Activated CD4-positive, alpha-beta memory T cell treated with anti-CD3 and anti-CD28 coated beads, Interleukin-2, amount 10 ng/mL, durations not matched to agents 7 days and 5 days (primary cell): ENCODE measurements at regions of chr10 and their contacts with region 1.

Region 1: GRCh38 chr10:42638055-42638820 is at the start of gene ZNF33B:
- DNase-seq: peak; percentile 97
- H3K4me3 Mint-ChIP-seq: peak within 1 kb of the TSS; percentile 97
- H3K27ac Mint-ChIP-seq: peak within 1 kb of the TSS; percentile 99
- H3K4me1 Mint-ChIP-seq: peaks cover 47% of the 10 kb centered on the region
- H3K27me3 Mint-ChIP-seq: no peaks in the 10 kb centered on the region
- total RNA-seq, gene ZNF33B: 19.9 to 23.8 TPM

Region 2: DNA sequence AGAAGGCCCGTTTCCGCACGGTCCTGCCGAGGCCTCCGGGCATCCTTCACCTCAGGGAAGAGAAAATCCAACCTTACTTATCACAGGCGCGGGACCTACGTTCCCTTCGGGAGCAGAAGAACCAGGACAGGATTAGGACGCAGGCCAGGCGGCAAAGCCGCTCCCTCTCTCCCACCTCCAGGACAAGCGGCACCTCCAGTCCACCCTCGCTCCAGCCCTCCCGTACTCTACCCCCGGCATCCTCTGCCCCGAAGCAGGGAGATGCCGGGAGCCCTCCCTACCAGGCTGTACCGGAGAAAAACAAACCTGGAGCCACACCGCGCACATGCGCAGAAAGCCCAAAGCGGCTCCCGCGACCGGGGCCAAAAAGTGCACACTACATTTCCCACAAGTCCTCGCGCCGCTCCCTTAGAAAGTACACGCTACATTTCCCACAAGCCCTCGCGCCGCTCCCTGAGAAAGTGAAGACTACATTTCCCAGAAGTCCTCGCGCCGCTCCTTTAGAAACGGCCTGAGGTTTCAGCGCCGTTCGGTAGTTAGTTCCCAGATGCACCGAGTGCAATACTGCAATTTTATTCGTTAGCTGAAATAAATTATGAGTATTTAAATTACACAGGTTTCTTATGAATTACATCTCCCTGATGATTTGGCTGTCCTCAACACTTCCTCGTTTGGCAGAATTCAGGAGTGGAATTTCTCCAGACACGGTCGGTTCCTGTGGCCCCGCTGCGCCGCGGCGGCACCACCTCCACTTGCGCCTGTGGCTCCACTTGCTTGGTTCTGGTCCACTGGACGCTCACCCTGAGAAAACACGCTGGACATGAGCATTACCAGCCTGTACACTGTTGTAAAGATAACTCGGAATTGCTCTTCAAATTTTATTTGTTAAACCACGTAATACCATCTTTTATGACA is 85.5 kb before region 1 on chr10:
- CTCF ChIA-PET with region 1: no interaction called
- POLR2A ChIA-PET with region 1: interaction called, 12 read pairs
- DNase-seq: peak; percentile 96
- H3K4me3 Mint-ChIP-seq: peak overlapping the region; percentile 97
- H3K27ac Mint-ChIP-seq: peak overlapping the region; percentile 90
- H3K4me1 Mint-ChIP-seq: peaks cover 35% of the 10 kb centered on the region
- H3K27me3 Mint-ChIP-seq: no peaks in the 10 kb centered on the region

Region 3: GRCh38 chr10:42782446-42783180 is 144.4 kb after region 1 on chr10 and contains the start of gene BMS1:
- CTCF ChIA-PET with region 1: no interaction called
- POLR2A ChIA-PET with region 1: interaction called, 16 read pairs
- DNase-seq: peak; percentile 91
- H3K4me3 Mint-ChIP-seq: peak within 1 kb of the TSS; percentile 88
- H3K27ac Mint-ChIP-seq: peak within 1 kb of the TSS; percentile 84
- H3K4me1 Mint-ChIP-seq: peaks cover 21% of the 10 kb centered on the region
- H3K27me3 Mint-ChIP-seq: peaks cover 3% of the 10 kb centered on the region
- total RNA-seq, gene BMS1: 14.3 to 14.6 TPM